Esophagus muscularis mucosa (tissue), 4 donors: ENCODE measurements at regions of chr3 and their contacts with region 1.

Region 1: DNA sequence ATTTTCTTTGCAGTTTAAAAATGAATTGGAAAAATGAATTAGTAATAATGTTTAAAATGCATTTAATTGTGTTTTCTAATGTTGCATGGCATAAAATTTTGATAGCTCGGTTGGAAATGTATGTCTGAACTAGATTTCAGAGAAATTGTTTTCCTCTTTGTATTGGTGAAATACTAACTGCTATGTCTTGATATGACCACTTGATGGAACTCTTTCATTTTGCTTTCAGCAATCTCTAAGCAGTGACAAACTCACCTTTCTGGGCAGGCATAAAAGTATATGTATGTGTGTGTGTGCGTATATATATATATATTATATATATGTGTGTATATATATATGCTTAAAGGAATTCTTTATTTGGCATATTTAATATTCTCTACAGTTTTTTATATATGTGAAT is 239.3 kb upstream of the ZNF717 start:
- DNase-seq: no peak
- H3K4me3 ChIP-seq: no peak overlapping the region
- H3K27ac ChIP-seq: no peak overlapping the region
- H3K4me1 ChIP-seq: no peaks in the 10 kb centered on the region
- H3K27me3 ChIP-seq: no peaks in the 10 kb centered on the region
- CTCF ChIP-seq: peak in 2 of 3 experiments; percentile 28 to 37
- EP300 ChIP-seq: no peak
- POLR2A ChIP-seq: no peak

Region 2: DNA sequence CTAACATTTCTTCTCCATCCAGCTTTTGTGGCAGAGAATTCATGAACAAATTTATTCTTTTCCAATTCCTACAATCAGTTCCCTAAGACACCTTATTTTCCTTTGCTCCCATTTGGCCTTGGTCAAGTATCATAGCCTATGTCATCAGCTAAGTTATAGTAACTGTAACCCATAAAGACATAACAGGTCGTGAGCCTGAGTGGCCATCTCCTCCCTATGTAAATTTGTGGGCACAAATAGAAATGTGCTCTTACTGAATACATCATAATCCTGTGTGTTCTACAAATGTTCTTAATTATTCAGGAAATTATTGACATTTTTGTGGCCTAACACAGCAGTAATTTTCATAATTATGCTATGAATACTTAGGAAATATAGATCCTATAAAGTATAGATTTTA is 130.4 kb before region 1 on chr3:
- intact Hi-C with region 1: no loop called
- DNase-seq: no peak
- H3K4me3 ChIP-seq: no peak overlapping the region
- H3K27ac ChIP-seq: no peak overlapping the region
- H3K4me1 ChIP-seq: no peaks in the 10 kb centered on the region
- H3K27me3 ChIP-seq: no peaks in the 10 kb centered on the region
- CTCF ChIP-seq: no peak
- EP300 ChIP-seq: no peak
- POLR2A ChIP-seq: no peak

Region 3: GRCh38 chr3:76107935-76108570 is 83.4 kb after region 1 on chr3:
- intact Hi-C with region 1: loop called (anchors 10 kb)
- DNase-seq: no peak
- H3K4me3 ChIP-seq: no peak overlapping the region
- H3K27ac ChIP-seq: no peak overlapping the region
- H3K4me1 ChIP-seq: no peaks in the 10 kb centered on the region
- H3K27me3 ChIP-seq: no peaks in the 10 kb centered on the region
- CTCF ChIP-seq: peak; percentile 50 to 69 (median 65)
- EP300 ChIP-seq: no peak
- POLR2A ChIP-seq: no peak

Region 4: GRCh38 chr3:76362643-76363042 is 338.0 kb after region 1 on chr3:
- intact Hi-C with region 1: no loop called
- DNase-seq: no peak
- H3K4me3 ChIP-seq: no peak overlapping the region
- H3K27ac ChIP-seq: no peak overlapping the region
- H3K4me1 ChIP-seq: no peaks in the 10 kb centered on the region
- H3K27me3 ChIP-seq: no peaks in the 10 kb centered on the region
- CTCF ChIP-seq: no peak
- EP300 ChIP-seq: no peak
- POLR2A ChIP-seq: no peak